ENCODE measurements at regions of chr3 and their contacts with region 1.

Region 1: GRCh38 chr3:177197041-177197727 is at the start of gene TBL1XR1:
- DNase-seq: peak; percentile 96
- H3K4me3 Mint-ChIP-seq: peak within 1 kb of the TSS; percentile 88
- H3K27ac Mint-ChIP-seq: peak within 1 kb of the TSS; percentile 98
- H3K4me1 Mint-ChIP-seq: peaks cover 52% of the 10 kb centered on the region
- H3K27me3 Mint-ChIP-seq: no peaks in the 10 kb centered on the region
- total RNA-seq, gene TBL1XR1: 160 and 178 TPM in 2 replicates

Region 2: GRCh38 chr3:177169936-177170722 is 27.1 kb before region 1 on chr3:
- intact Hi-C with region 1: loop called (anchors 1 kb)
- DNase-seq: no peak
- H3K4me3 Mint-ChIP-seq: no peak overlapping the region
- H3K27ac Mint-ChIP-seq: peak overlapping the region; percentile 4
- H3K4me1 Mint-ChIP-seq: peaks cover 43% of the 10 kb centered on the region
- H3K27me3 Mint-ChIP-seq: no peaks in the 10 kb centered on the region

Region 3: DNA sequence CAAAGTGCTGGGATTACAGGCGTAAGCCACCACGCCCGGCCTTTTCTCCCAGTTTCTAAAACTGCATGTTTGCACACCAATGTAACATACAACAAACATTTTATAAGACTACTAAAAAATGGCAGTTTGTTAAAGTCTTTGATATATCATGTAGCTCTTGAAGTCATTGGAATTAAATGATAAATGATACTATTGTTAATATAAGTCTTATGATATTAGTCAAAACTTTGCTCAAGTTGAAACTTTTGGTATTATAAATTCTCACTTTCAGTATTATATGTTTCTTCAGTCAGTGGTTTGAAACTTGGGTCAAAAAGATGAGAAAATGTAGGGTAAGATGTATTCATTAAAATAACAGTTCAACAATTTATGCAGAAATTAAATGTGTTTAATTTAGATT is 117.7 kb after region 1 on chr3:
- intact Hi-C with region 1: loop called (anchors 1 kb)
- DNase-seq: no peak
- H3K4me3 Mint-ChIP-seq: no peak overlapping the region
- H3K27ac Mint-ChIP-seq: peak overlapping the region; percentile 60
- H3K4me1 Mint-ChIP-seq: peaks cover 14% of the 10 kb centered on the region
- H3K27me3 Mint-ChIP-seq: no peaks in the 10 kb centered on the region

Region 4: DNA sequence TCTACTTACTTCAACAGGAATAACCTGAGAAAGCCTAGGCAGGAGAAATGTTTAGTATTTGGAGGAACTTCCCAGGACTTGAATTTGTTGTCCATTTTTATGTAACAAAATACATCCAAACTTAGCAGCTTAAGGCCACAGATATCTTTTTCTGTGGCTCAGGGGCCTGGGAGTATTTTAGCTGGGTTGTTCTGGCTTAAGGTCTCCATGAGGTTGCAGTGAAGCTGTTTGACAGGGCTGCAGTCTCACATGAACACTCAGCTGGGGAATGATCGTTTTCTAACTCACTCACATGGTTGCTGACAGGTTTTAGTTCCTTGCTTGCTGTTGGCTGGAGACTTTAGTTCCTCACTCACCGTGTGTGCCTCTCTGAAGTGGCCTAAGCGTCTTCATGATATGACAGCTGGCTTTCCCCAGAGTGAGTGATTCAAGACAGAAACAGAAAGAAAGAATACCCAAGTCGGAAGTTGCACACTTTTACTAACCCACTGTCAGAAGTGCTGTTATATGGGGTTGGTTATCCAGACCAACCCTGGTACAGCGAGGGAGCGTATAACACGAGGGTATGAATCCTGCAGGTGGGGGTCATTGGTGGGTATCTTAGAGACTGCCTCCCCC is 229.8 kb after region 1 on chr3:
- intact Hi-C with region 1: loop called (anchors 1 kb)
- DNase-seq: peak; percentile 88
- H3K4me3 Mint-ChIP-seq: peak overlapping the region; percentile 65
- H3K27ac Mint-ChIP-seq: peak overlapping the region; percentile 91
- H3K4me1 Mint-ChIP-seq: peaks cover 31% of the 10 kb centered on the region
- H3K27me3 Mint-ChIP-seq: peaks cover 9% of the 10 kb centered on the region

Region 5: GRCh38 chr3:177787279-177788041 is 590.3 kb after region 1 on chr3:
- intact Hi-C with region 1: loop called (anchors 1 kb)
- DNase-seq: peak; percentile 61
- H3K4me3 Mint-ChIP-seq: no peak overlapping the region
- H3K27ac Mint-ChIP-seq: peak overlapping the region; percentile 60
- H3K4me1 Mint-ChIP-seq: peaks cover 14% of the 10 kb centered on the region
- H3K27me3 Mint-ChIP-seq: no peaks in the 10 kb centered on the region

Measured in activated CD4-positive, alpha-beta T cell treated with anti-CD3 and anti-CD28 coated beads, Interleukin-2, amount 10 ng/mL, durations not matched to agents 24 days and 14 days (primary cell).